Astrocyte of the cerebellum (primary cell): ENCODE measurements at regions of chr7 and their contacts with region 1.

Region 1: DNA sequence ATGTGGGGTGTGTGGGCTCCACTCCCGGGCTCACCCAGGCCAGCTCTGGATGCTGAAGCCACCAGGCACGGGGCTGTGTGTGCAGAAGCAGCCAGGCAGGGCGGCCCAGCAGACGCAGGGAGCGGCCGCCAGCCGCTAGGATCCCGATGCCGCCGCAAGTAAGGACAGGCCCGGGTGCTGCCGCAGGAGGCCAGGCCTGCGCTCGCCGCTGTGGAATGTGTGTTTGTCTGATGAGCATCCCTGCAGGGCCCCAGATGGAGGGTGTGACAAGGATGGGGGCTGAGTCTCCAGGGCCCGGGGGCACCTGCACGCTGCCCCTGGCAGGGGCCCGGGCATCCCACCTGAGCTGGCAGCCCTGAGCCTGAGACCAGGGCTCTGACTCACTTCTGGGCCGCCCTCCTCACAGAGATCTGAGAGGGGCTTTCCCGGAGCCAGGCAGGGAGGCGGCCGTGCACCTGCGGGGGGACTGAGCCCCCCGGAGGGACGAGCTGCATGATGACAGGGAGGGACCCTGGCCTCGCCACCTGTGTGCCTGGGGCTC is 101.5 kb downstream of the FOXL3 start:
- DNase-seq: no peak
- H3K4me3 ChIP-seq: no peak overlapping the region
- CTCF ChIP-seq: no peak

Region 2: DNA sequence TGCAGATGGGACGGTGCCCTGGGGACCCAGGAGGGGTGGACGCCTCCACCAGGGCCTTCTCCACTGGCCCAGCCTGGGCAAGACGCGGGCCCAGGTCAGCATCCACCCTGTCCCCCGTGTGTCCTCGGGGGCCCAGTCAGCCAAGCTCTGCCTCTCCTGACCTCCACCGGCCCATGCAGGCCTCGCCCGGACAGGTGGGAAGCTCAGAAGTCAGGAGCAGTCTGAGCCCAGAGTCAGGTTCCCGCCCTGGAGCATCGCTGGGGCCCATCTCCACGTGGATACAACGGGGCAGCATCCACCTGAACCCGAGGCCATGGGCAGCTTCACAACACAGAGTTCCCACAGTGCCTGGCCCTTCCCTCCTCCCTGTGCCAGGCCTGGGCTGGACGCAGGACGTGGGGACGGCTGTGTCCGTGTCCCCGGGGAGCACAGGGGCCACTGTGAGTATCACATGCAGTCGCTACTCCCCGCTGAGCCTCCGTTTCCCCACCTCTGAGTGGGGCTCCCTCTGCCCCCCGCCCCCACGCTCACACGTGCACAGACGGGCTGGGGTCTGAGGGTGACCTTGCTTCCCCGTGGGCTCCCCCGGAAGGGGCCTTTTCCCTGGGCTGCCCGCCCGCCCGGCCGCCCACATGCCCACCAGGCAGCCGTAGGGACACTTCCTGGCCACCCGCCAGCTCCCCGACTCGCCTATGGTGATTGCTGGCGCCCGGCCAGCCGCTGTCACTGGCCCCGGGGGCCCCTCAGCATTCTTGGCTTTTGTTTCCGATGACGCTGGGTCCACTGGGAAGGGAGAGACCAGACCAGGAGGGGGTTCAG is 63.8 kb after region 1 on chr7:
- in situ Hi-C with region 1: no loop called
- DNase-seq: no peak
- H3K4me3 ChIP-seq: no peak overlapping the region
- CTCF ChIP-seq: no peak

Region 3: GRCh38 chr7:490461-491291 is 99.2 kb after region 1 on chr7:
- in situ Hi-C with region 1: loop called (anchors 10 kb)
- DNase-seq: no peak
- H3K4me3 ChIP-seq: no peak overlapping the region
- CTCF ChIP-seq: no peak

Region 4: DNA sequence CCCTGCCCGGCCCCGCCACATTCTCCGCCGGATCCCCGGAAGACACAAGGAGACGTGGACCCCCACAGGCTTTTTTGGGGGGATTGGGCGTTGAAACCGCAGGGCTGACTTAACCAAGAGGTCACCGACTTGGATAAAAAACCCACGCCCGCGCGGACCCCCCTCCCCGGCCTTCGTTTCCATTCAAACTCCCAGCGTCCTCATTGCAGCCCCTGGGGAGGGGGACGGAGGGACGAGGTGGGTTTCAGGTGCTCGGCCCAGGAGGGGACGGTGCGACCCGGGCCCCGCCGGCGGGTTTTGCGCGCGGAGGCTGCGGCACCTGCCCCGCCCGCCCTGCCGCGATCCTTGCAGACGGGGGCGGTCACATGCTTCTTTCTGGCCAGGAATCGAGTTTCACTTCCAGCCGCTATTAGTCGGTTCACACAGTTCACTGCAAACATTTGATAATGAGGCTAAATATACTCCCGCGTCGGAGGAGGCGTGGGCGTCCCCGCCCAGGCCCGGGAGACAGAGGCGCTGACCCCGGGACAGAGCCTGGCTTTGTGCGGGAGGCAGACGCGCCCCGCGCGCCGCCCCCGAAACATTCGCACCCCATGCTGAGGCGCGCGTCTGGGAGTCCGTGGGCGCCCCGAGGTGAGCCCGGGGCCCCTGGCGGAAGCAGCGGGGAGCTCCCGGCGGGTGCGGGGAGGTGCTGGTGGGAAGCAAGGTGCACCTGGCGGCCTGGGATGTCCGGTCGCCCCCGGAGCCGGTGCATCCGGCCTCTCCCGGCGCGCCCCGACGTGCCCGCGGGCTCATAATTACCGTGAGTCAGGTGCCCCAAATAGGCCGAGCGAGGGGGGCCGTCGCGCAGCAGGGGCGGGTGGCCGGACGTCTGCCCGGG is 130.8 kb after region 1 on chr7:
- in situ Hi-C with region 1: no loop called
- DNase-seq: no peak
- H3K4me3 ChIP-seq: peak overlapping the region; percentile 29
- CTCF ChIP-seq: no peak